GM10248 (cell line): ENCODE measurements at regions of chr16 and their contacts with region 1.

Region 1: GRCh38 chr16:27690608-27691007 is 140.7 kb downstream of the KATNIP start:
- DNase-seq: peak; percentile 36
- CTCF ChIP-seq: peak; percentile 45

Region 2: GRCh38 chr16:27703545-27703944 is 12.9 kb after region 1 on chr16:
- CTCF ChIA-PET with region 1: interaction called, 19 read pairs
- POLR2A ChIA-PET with region 1: no interaction called
- DNase-seq: no peak
- CTCF ChIP-seq: no peak